Mammary epithelial cell (primary cell): ENCODE measurements at regions of chr2 and their contacts with region 1.

Region 1: GRCh38 chr2:64873472-64873924 is 115.7 kb upstream of the SLC1A4 start:
- DNase-seq: peak; percentile 36
- H3K4me3 ChIP-seq: peak overlapping the region in 1 of 3 experiments; percentile 11
- H3K27ac ChIP-seq: no peak overlapping the region
- H3K4me1 ChIP-seq: peaks cover 21% of the 10 kb centered on the region
- H3K27me3 ChIP-seq: no peaks in the 10 kb centered on the region
- CTCF ChIP-seq: peak; percentile 90 to 91

Region 2: GRCh38 chr2:64036034-64036705 is 837.3 kb before region 1 on chr2:
- CTCF ChIA-PET with region 1: no interaction called
- dilution Hi-C with region 1: no loop called
- in situ Hi-C with region 1: loop called in 1 of 2 experiments (anchors 25 kb)
- intact Hi-C with region 1: no loop called
- DNase-seq: peak; percentile 78
- H3K4me3 ChIP-seq: no peak overlapping the region
- H3K27ac ChIP-seq: no peak overlapping the region
- H3K4me1 ChIP-seq: peaks cover 8% of the 10 kb centered on the region
- H3K27me3 ChIP-seq: no peaks in the 10 kb centered on the region
- CTCF ChIP-seq: no peak

Region 3: DNA sequence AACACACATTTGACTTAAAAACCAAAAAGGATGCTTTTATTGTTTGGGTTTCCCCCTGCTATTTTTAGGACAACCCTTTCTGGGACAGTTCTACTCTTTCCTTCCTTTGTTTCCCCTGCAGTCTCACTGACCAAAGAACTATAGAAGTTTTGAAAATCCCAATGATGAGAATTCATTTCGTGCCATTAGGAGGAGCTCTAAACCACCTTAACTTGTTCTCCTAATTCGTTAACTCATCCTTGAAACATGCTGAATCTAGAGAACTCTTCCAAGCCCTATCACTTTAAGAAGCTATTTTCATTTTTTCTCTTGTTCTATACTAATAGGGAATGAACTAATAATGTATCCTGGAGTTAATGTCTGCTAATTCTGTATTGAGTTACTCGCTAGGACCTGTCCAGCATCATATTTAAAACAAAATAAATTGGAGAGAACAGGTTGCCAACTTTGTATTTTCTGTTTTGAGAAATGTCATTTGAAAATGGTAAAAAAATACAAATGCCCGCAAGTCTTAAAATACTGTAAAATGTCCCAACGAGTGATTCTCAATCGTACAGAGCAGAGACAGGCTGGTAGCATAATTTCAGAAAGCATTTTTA is 286.5 kb before region 1 on chr2:
- CTCF ChIA-PET with region 1: interaction called, 6 read pairs
- dilution Hi-C with region 1: no loop called
- in situ Hi-C with region 1: loop called in 1 of 2 experiments (anchors 10 kb)
- intact Hi-C with region 1: loop called (anchors 1 kb)
- DNase-seq: peak; percentile 47
- H3K4me3 ChIP-seq: no peak overlapping the region
- H3K27ac ChIP-seq: no peak overlapping the region
- H3K4me1 ChIP-seq: no peaks in the 10 kb centered on the region
- H3K27me3 ChIP-seq: no peaks in the 10 kb centered on the region
- CTCF ChIP-seq: peak; percentile 59 to 67

Region 4: GRCh38 chr2:64595397-64596160 is 277.9 kb before region 1 on chr2:
- CTCF ChIA-PET with region 1: no interaction called
- dilution Hi-C with region 1: loop called (anchors 25 kb)
- in situ Hi-C with region 1: loop called (anchors 5 to 10 kb)
- intact Hi-C with region 1: no loop called
- DNase-seq: no peak
- H3K4me3 ChIP-seq: no peak overlapping the region
- H3K27ac ChIP-seq: no peak overlapping the region
- H3K4me1 ChIP-seq: peaks cover 13% of the 10 kb centered on the region
- H3K27me3 ChIP-seq: no peaks in the 10 kb centered on the region
- CTCF ChIP-seq: peak; percentile 19 to 40

Region 5: DNA sequence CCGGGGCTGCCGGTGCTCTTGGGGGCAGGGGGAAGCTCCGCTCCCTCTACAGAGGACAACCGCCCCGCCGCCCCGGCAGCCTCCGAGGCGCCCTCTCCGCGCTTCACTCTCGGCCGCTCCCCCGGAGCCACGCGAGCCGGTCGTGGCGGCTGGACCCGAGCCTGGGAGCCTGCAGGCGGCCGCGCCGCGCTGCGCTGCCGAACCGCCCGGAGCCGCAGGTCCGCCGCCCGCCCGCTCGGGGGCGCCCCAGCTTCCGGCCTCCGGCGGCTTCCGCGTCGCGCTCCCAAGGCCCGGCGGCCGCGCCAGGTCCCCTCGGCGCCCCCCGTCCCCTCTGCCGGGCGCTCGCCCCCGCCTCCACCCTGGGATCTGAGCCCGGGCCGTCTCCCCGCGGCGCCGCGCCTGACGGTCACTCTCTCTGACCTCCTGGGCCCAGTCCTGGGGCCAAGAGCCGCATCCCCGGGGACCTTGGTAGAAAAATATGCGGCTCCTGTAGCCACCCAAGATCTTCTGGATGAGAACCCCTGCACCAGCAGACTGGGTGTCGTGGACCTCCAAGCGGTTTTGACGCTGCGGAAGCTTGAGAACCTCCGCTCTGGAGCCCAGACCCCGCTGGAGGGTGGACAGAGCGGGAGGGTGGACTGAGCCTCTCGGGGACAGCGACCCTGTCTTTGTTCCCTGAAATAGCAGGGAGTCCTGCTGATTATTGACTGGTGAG is 264.1 kb before region 1 on chr2:
- CTCF ChIA-PET with region 1: no interaction called
- dilution Hi-C with region 1: loop called (anchors 25 kb)
- in situ Hi-C with region 1: no loop called
- intact Hi-C with region 1: no loop called
- DNase-seq: no peak
- H3K4me3 ChIP-seq: peak overlapping the region; percentile 16 to 52 (median 51)
- H3K27ac ChIP-seq: no peak overlapping the region
- H3K4me1 ChIP-seq: peaks cover 8% of the 10 kb centered on the region
- H3K27me3 ChIP-seq: no peaks in the 10 kb centered on the region
- CTCF ChIP-seq: peak in 1 of 2 donors; percentile 25

Region 6: GRCh38 chr2:65411056-65411795 is 537.7 kb after region 1 on chr2:
- CTCF ChIA-PET with region 1: no interaction called
- dilution Hi-C with region 1: no loop called
- in situ Hi-C with region 1: no loop called
- intact Hi-C with region 1: no loop called
- DNase-seq: no peak
- H3K4me3 ChIP-seq: no peak overlapping the region
- H3K27ac ChIP-seq: no peak overlapping the region
- H3K4me1 ChIP-seq: peaks cover under 1% of the 10 kb centered on the region
- H3K27me3 ChIP-seq: no peaks in the 10 kb centered on the region
- CTCF ChIP-seq: no peak